PC-3 (cell line): ENCODE measurements at regions of chr4 and their contacts with region 1.

Region 1: GRCh38 chr4:88706574-88706973 is 8.9 kb upstream of the NAP1L5 start:
- DNase-seq: peak; percentile 67
- ATAC-seq: peak; percentile 68
- H3K4me3 ChIP-seq: 0 out of 2 replicates have a peak overlapping the region, but pooled peaks have one; percentile 14
- H3K27ac ChIP-seq: no peak overlapping the region
- H3K4me1 ChIP-seq: peaks cover 12% of the 10 kb centered on the region
- H3K27me3 ChIP-seq: no peaks in the 10 kb centered on the region
- CTCF ChIP-seq: peak; percentile 69

Region 2: DNA sequence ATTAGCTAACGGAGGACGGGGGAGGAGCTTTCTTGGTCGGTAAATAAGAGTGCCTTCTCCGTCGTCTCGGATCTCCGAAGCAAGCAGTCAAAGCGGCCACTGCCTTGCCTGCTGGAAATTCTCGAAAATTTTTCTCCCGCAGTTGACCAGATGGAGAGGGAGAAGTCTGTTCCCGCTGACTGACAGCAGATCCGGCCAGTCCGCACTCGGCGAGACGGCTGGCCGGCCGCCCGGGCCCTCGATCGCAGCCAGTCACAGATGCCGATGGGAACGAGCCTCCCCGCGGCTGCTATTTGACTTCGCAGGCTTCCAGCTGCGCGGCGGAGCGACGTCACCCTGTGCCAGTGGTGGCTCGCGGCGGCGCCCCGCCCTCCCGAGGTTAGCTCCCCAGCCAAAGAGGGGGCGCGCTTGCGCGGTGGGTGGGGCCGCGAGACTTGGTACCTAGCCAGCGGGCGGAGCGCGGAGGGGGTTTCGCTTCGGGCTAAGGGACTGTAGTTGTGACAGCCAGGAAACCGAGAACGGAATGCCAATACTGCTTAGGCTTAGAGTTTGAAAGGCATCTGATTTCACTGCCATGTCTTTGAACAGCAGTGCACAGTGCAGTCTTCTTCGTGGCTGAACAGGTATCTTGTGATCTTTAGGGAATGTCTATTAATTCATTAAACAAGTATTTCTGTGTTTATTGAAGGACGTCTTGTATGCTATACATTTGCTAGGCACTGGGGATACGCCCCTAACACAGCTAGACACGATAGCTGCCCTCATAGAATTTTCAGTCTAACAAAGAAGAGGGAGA is 421.9 kb before region 1 on chr4 and contains the start of gene PPM1K:
- CTCF ChIA-PET with region 1: no interaction called
- POLR2A ChIA-PET with region 1: no interaction called
- intact Hi-C with region 1: no loop called
- DNase-seq: peak; percentile 96
- ATAC-seq: peak; percentile 91
- H3K4me3 ChIP-seq: peak within 1 kb of the TSS; percentile 88
- H3K27ac ChIP-seq: peak within 1 kb of the TSS; percentile 68
- H3K4me1 ChIP-seq: peaks cover 21% of the 10 kb centered on the region
- H3K27me3 ChIP-seq: no peaks in the 10 kb centered on the region
- CTCF ChIP-seq: no peak
- total RNA-seq, gene PPM1K: 3.0 and 5.7 TPM in 2 replicates

Region 3: GRCh38 chr4:88528861-88529260 is 177.7 kb before region 1 on chr4:
- CTCF ChIA-PET with region 1: no interaction called
- POLR2A ChIA-PET with region 1: no interaction called
- intact Hi-C with region 1: loop called (anchors 2 kb)
- DNase-seq: no peak
- ATAC-seq: no peak
- H3K4me3 ChIP-seq: no peak overlapping the region
- H3K27ac ChIP-seq: no peak overlapping the region
- H3K4me1 ChIP-seq: peaks cover 40% of the 10 kb centered on the region
- H3K27me3 ChIP-seq: no peaks in the 10 kb centered on the region
- CTCF ChIP-seq: peak; percentile 26; the same call in 1 of the 2 replicates

Region 4: DNA sequence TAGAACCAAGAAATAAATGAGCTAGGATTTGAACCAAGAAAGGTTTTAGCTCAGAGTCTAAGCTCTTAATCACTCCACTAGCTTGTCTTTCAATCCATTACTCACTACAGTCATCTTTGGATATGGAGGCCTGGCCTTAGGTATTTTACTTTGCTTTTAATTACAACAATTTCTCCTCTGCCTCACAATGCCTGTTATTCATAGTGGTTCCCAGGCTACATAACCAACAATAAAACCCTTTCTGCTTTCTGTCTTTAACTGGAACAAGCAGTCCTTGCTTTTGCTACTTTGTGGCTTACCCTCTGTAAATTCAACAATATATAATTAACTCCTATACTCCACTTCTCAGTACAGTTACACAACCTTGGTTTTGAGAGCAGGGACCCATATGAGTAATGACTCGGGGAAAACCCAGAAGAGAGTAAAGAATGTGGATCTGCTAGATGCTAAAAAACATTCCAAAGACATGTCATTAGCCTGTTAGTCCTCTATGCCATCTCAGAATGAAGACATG is 85.8 kb after region 1 on chr4:
- CTCF ChIA-PET with region 1: no interaction called
- POLR2A ChIA-PET with region 1: no interaction called
- intact Hi-C with region 1: loop called (anchors 1 kb)
- DNase-seq: peak; percentile 63
- ATAC-seq: peak; percentile 55
- H3K4me3 ChIP-seq: no peak overlapping the region
- H3K27ac ChIP-seq: peak overlapping the region; percentile 7
- H3K4me1 ChIP-seq: peaks cover 26% of the 10 kb centered on the region
- H3K27me3 ChIP-seq: no peaks in the 10 kb centered on the region
- CTCF ChIP-seq: no peak

Region 5: GRCh38 chr4:88964450-88964849 is 257.9 kb after region 1 on chr4:
- CTCF ChIA-PET with region 1: no interaction called
- POLR2A ChIA-PET with region 1: no interaction called
- intact Hi-C with region 1: loop called (anchors 10 kb)
- DNase-seq: peak; percentile 55
- ATAC-seq: peak; percentile 68
- H3K4me3 ChIP-seq: no peak overlapping the region
- H3K27ac ChIP-seq: peak overlapping the region; percentile 90
- H3K4me1 ChIP-seq: peaks cover 49% of the 10 kb centered on the region
- H3K27me3 ChIP-seq: no peaks in the 10 kb centered on the region
- CTCF ChIP-seq: no peak

Region 6: GRCh38 chr4:89024051-89024675 is 317.6 kb after region 1 on chr4:
- CTCF ChIA-PET with region 1: interaction called, 4 read pairs
- POLR2A ChIA-PET with region 1: no interaction called
- intact Hi-C with region 1: loop called (anchors 1 kb)
- DNase-seq: peak; percentile 76
- ATAC-seq: peak; percentile 81
- H3K4me3 ChIP-seq: no peak overlapping the region
- H3K27ac ChIP-seq: no peak overlapping the region
- H3K4me1 ChIP-seq: no peaks in the 10 kb centered on the region
- H3K27me3 ChIP-seq: no peaks in the 10 kb centered on the region
- CTCF ChIP-seq: peak; percentile 82